Upper lobe of right lung (tissue), 1 donor: ENCODE measurements at regions of chr11 and their contacts with region 1.

Region 1: GRCh38 chr11:5460983-5461621 is 12.0 kb downstream of the OR51I2 start:
- DNase-seq: no peak
- ATAC-seq: no peak
- H3K4me3 ChIP-seq: no peak overlapping the region
- H3K27ac ChIP-seq: no peak overlapping the region
- H3K4me1 ChIP-seq: no peaks in the 10 kb centered on the region
- H3K27me3 ChIP-seq: no peaks in the 10 kb centered on the region
- CTCF ChIP-seq: no peak

Region 2: GRCh38 chr11:5277807-5278382 is 183.2 kb before region 1 on chr11:
- intact Hi-C with region 1: no loop called
- DNase-seq: no peak
- ATAC-seq: no peak
- H3K4me3 ChIP-seq: no peak overlapping the region
- H3K27ac ChIP-seq: no peak overlapping the region
- H3K4me1 ChIP-seq: no peaks in the 10 kb centered on the region
- H3K27me3 ChIP-seq: no peaks in the 10 kb centered on the region
- CTCF ChIP-seq: no peak

Region 3: DNA sequence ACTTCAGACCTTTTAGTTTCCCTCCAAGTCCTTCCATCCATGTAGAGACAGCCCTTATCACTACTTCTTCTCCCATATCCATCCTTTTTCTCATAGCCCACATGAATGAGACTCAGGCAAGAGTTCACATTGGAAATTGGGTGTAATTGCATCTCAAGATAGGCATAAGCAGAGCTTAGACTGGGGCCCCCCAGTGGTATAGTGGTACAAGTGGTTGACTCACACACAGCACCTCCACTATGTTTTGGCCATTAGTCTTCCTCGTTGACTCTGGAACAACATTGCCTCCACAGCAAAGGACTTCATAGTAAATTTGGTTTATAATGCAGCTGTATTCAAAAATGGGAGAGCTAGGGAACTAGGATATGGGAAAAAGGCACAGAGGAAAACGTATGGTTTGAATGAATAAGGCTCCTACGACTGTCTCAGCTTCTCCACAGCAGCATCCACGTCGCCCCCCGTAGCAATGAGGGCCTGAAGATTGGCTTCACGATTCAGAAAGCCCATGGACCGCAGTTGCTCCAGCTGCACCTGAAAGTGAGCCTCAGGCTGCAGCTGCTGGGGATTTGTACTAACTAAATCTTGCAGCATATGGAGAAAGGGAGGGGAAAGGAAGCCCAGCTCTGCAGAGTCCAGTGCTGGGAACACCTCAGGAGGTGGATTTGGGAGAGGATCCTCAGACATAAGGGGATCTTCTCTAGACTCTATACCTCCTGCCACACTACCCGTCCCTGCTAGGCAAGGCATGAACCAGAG is 46.3 kb after region 1 on chr11:
- intact Hi-C with region 1: no loop called
- DNase-seq: no peak
- ATAC-seq: no peak
- H3K4me3 ChIP-seq: no peak overlapping the region
- H3K27ac ChIP-seq: no peak overlapping the region
- H3K4me1 ChIP-seq: no peaks in the 10 kb centered on the region
- H3K27me3 ChIP-seq: no peaks in the 10 kb centered on the region
- CTCF ChIP-seq: no peak

Region 4: DNA sequence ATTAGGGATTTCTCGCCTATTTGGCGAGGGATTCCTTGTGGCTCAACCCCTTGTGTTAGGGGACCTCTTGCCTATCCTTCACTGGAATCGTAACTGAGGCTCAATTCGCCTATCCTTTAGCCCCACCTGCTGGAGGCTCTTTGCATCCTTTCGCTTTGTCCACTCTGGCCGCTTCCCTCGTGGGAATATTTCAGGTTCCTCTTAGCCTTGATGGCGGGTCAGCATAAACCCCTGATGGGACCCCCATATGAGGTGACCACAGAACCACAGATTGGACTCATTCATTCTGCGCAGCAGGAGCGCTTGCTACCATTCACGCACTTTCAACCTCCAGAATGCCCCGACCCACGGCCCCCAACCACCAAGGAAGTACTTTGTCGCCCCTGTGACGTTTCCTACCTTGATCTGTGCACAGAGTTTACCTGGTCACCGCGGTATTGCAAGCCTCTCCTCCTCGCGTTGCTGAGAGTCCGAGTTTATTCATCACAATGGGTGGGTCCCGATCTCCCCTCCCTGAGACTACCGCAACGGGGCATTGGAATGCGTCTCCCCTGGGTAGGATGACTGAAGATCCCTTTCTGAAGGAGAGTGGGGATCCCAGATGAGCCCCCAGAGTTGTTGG is 347.5 kb after region 1 on chr11 and contains the start of gene OR52N2:
- intact Hi-C with region 1: loop called (anchors 10 kb)
- DNase-seq: peak; percentile 67
- ATAC-seq: peak; percentile 99
- H3K4me3 ChIP-seq: peak within 1 kb of the TSS; percentile 48
- H3K27ac ChIP-seq: no peak within 1 kb of the TSS
- H3K4me1 ChIP-seq: no peaks in the 10 kb centered on the region
- H3K27me3 ChIP-seq: no peaks in the 10 kb centered on the region
- CTCF ChIP-seq: peak; percentile 88
- total RNA-seq, gene OR52N2: not detected